ENCODE measurements at regions of chr11 and their contacts with region 1.

Region 1: GRCh38 chr11:10735481-10736475 is 15.3 kb upstream of the CTR9 start:
- DNase-seq: peak; percentile 93
- H3K4me3 Mint-ChIP-seq: peak overlapping the region; percentile 66
- H3K27ac Mint-ChIP-seq: peak overlapping the region; percentile 82
- H3K4me1 Mint-ChIP-seq: peaks cover 14% of the 10 kb centered on the region
- H3K27me3 Mint-ChIP-seq: no peaks in the 10 kb centered on the region
- CTCF ChIP-seq: peak; percentile 98

Region 2: GRCh38 chr11:10322830-10323792 is 412.7 kb before region 1 on chr11:
- CTCF ChIA-PET with region 1: interaction called, 5 read pairs
- POLR2A ChIA-PET with region 1: interaction called, 3 read pairs
- intact Hi-C with region 1: loop called (anchors 5 kb)
- DNase-seq: peak; percentile 87
- H3K4me3 Mint-ChIP-seq: no peak overlapping the region
- H3K27ac Mint-ChIP-seq: peak overlapping the region; percentile 54
- H3K4me1 Mint-ChIP-seq: peaks cover 20% of the 10 kb centered on the region
- H3K27me3 Mint-ChIP-seq: no peaks in the 10 kb centered on the region
- CTCF ChIP-seq: peak; percentile 43

Region 3: GRCh38 chr11:10514210-10514609 is 221.6 kb before region 1 on chr11:
- CTCF ChIA-PET with region 1: interaction called, 4 read pairs
- POLR2A ChIA-PET with region 1: no interaction called
- intact Hi-C with region 1: loop called (anchors 1 kb)
- DNase-seq: peak; percentile 14
- H3K4me3 Mint-ChIP-seq: no peak overlapping the region
- H3K27ac Mint-ChIP-seq: no peak overlapping the region
- H3K4me1 Mint-ChIP-seq: no peaks in the 10 kb centered on the region
- H3K27me3 Mint-ChIP-seq: no peaks in the 10 kb centered on the region
- CTCF ChIP-seq: peak; percentile 35

Region 4: GRCh38 chr11:10623797-10624761 is 111.7 kb before region 1 on chr11:
- CTCF ChIA-PET with region 1: no interaction called
- POLR2A ChIA-PET with region 1: no interaction called
- intact Hi-C with region 1: loop called (anchors 1 kb)
- DNase-seq: peak; percentile 29
- H3K4me3 Mint-ChIP-seq: no peak overlapping the region
- H3K27ac Mint-ChIP-seq: no peak overlapping the region
- H3K4me1 Mint-ChIP-seq: no peaks in the 10 kb centered on the region
- H3K27me3 Mint-ChIP-seq: no peaks in the 10 kb centered on the region
- CTCF ChIP-seq: no peak